ENCODE measurements at regions of chr19 and their contacts with region 1.

Region 1: DNA sequence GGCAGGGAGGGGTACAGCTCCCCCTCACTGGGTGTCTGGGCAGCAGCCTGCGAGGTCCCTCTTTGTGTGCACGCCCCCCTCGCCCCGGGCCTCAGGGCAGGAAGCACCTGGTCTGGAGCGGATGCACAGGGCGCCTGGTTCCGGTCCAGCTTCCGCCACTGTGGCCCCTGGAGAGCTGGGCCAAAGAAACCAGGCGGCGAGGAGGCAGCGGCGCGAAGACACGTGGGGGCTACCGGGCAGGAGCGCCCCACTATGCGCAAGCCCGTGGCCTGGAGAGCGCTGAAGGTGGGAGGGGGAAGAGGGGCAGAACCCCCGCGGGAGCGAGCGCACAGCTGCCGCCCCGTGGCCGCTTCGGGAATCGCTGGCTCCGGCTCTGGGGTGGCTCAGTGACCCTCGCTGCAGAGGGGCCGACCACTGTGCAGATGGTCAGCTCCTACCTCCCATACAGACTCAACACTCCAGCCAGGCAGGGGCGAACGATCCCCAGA is 1.7 kb upstream of the LYL1 start:
- DNase-seq: peak; percentile 85
- ATAC-seq: peak; percentile 12 to 21

Region 2: DNA sequence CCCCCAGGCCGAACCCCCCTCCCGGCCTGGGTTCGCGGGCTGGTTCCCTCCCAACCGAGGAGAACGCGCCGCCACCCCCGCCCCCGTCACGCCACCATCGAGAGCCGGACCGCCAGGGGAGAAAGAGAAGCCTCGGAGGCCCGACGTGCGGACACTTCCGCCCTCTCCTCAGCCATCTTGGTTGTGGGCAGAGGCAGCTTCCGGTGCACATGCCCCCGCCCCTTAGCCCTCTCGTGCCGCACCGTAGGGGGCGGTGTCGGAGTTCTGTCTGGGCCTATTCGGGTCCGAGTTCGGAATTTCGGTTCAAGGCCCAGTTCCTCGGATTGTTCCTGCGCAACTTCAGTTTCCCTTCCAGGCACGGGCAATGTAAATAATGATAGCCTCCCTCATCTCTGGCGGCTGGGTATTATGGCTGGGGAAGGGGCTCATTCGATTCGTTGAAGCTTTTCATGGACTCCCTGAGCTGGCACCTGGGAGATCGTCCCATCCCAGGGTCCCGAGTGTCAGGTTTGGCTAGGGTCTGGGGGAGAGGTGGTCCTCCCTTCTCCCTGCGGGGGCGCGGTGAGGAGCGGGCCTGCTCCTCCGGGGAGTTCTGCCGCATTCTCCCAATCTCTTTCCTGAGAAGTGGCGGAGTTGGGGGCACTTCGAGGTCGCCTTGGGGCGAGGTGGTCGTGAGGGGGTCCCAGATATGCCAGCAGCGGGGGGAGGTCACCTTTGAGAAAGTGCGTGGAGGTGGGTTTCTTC is 46.0 kb after region 1 on chr19 and contains the starts of genes IER2 and STX10:
- intact Hi-C with region 1: loop called in 1 of 2 experiments (anchors 5 kb)
- DNase-seq: peak; percentile 97
- ATAC-seq: peak; percentile 68 to 70
- total RNA-seq, gene IER2: 36.9 to 61.3 TPM
- total RNA-seq, gene STX10: 30.0 to 36.1 TPM

Region 3: GRCh38 chr19:13190781-13191540 is 86.6 kb after region 1 on chr19:
- intact Hi-C with region 1: no loop called
- DNase-seq: no peak
- ATAC-seq: no peak